Endothelial cell of umbilical vein (primary cell): ENCODE measurements at regions of chr15 and their contacts with region 1.

Region 1: GRCh38 chr15:65856821-65857455 is 12.4 kb upstream of the RAB11A start:
- DNase-seq: peak; percentile 49
- H3K4me3 ChIP-seq: no peak overlapping the region
- H3K27ac ChIP-seq: no peak overlapping the region
- H3K4me1 ChIP-seq: no peaks in the 10 kb centered on the region
- H3K27me3 ChIP-seq: no peaks in the 10 kb centered on the region
- CTCF ChIP-seq: peak; percentile 74 to 81
- POLR2A ChIP-seq: no peak

Region 2: DNA sequence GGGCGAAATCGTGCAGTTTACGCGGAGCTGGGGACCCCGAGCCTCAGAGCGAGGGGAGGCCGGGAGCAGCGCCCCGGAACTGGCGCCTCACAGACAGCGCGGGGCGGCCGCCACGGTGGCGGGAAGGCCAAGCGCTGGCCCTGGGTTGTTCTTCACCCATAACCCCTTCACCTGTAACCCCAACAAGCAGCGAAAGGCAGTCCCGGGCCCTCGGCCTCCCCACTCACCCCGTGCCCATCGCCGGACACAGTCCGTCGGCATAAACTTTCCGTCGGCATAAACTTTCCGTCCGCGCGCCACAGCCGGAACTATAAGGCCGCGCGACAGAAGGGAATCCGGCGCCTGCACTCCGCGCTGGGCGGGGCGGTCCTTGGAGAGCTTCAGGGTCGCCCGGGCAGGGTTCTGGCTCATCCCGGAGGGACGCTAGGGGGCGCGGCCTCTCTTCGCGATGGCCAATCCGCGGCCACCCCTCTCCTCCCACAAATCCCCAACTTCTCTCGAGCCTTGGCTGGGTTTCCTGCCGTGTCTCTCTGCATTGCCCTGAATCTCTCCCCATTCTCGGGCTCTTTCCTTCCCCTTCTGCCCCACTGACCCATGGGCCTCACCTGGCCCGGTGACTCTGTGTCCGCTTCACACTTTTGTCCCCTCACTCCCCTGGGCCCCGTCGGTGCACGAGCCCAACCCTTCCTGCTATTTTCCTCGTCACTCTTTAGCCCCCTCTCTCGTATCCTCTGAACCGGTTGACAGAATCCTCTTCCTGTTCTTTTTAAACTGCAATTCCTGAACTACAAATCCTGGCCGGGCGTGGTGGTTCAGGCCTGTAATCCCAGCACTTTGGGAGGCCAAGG is 245.8 kb before region 1 on chr15 and contains the start of gene INTS14:
- CTCF ChIA-PET with region 1: interaction called, 5 read pairs
- POLR2A ChIA-PET with region 1: no interaction called
- dilution Hi-C with region 1: no loop called
- intact Hi-C with region 1: loop called (anchors 2 kb)
- DNase-seq: peak; percentile 95
- H3K4me3 ChIP-seq: peak within 1 kb of the TSS; percentile 87 to 96 (median 96)
- H3K27ac ChIP-seq: peak within 1 kb of the TSS; percentile 84
- H3K4me1 ChIP-seq: peaks cover 20% of the 10 kb centered on the region
- H3K27me3 ChIP-seq: no peaks in the 10 kb centered on the region
- CTCF ChIP-seq: peak; percentile 60 to 71
- POLR2A ChIP-seq: peak; percentile 97
- total RNA-seq, gene INTS14: 41.7 and 44.6 TPM in 2 replicates

Region 3: GRCh38 chr15:65638681-65639089 is 218.3 kb before region 1 on chr15:
- CTCF ChIA-PET with region 1: interaction called, 25 read pairs
- POLR2A ChIA-PET with region 1: no interaction called
- dilution Hi-C with region 1: no loop called
- intact Hi-C with region 1: loop called (anchors 1 kb)
- DNase-seq: peak; percentile 74
- H3K4me3 ChIP-seq: no peak overlapping the region
- H3K27ac ChIP-seq: no peak overlapping the region
- H3K4me1 ChIP-seq: peaks cover 20% of the 10 kb centered on the region
- H3K27me3 ChIP-seq: no peaks in the 10 kb centered on the region
- CTCF ChIP-seq: peak; percentile 72
- POLR2A ChIP-seq: no peak

Region 4: GRCh38 chr15:65841121-65841925 is 15.6 kb before region 1 on chr15:
- CTCF ChIA-PET with region 1: interaction called, 28 read pairs
- POLR2A ChIA-PET with region 1: no interaction called
- dilution Hi-C with region 1: no loop called
- intact Hi-C with region 1: no loop called
- DNase-seq: peak; percentile 67
- H3K4me3 ChIP-seq: no peak overlapping the region
- H3K27ac ChIP-seq: peak overlapping the region; percentile 55
- H3K4me1 ChIP-seq: peaks cover 35% of the 10 kb centered on the region
- H3K27me3 ChIP-seq: no peaks in the 10 kb centered on the region
- CTCF ChIP-seq: no peak
- POLR2A ChIP-seq: no peak